ENCODE measurements at regions of chr10 and their contacts with region 1.

Region 1: GRCh38 chr10:97032624-97033023 is 153.1 kb downstream of the SLIT1 start:
- DNase-seq: no peak
- ATAC-seq: no peak
- H3K4me3 ChIP-seq: no peak overlapping the region
- H3K27ac ChIP-seq: no peak overlapping the region
- H3K4me1 ChIP-seq: 0 out of 2 replicates have a peak, but pooled peaks cover 4% of the 10 kb centered on the region
- H3K27me3 ChIP-seq: no peaks in the 10 kb centered on the region; the same call in 1 of the 2 replicates
- CTCF ChIP-seq: no peak

Region 2: DNA sequence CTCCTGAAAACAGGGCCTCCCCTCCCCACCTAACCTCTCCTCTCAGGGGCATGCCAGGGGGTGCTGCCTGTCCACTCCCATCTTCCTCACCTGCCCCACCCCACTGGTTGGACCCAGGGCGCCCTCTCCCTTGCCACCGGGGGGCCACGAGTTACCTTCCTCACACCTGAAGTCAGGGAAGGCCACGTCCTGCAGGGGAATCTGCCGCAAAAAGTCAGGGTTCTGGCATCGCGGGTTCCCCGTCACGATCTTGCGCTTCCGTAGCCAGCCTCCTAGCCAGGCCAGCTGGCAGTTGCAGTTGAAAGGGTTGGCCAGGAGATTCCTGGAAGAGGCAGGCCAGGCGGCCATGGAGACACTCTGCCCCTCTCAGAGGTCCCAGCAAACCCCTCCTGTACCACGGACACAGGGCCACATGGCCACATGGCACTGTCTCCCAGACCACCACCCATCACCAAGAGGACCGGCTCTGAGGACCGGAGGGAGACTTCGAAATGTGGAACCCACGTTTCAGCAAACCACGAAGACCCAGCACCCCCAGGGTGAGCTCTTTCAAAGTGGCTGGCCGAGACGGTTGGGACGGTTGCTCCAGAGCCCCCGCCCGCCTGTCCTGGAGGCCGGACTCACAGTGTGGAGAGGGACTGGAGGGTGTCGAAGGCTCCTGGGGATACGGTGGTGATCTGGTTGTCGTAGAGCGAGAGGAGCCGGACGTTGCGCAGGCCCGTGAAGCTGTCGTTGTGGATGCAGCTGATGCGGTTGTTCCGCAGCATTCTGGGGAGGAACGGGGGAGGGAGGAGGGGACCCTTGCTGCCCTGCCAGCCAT is 10.3 kb after region 1 on chr10:
- CTCF ChIA-PET with region 1: no interaction called
- POLR2A ChIA-PET with region 1: interaction called, 12 read pairs
- in situ Hi-C with region 1: no loop called
- intact Hi-C with region 1: no loop called
- DNase-seq: no peak
- ATAC-seq: no peak
- H3K4me3 ChIP-seq: no peak overlapping the region
- H3K27ac ChIP-seq: no peak overlapping the region
- H3K4me1 ChIP-seq: no peaks in the 10 kb centered on the region
- H3K27me3 ChIP-seq: no peaks in the 10 kb centered on the region
- CTCF ChIP-seq: no peak